ENCODE measurements at regions of chr10 and their contacts with region 1.

Region 1: DNA sequence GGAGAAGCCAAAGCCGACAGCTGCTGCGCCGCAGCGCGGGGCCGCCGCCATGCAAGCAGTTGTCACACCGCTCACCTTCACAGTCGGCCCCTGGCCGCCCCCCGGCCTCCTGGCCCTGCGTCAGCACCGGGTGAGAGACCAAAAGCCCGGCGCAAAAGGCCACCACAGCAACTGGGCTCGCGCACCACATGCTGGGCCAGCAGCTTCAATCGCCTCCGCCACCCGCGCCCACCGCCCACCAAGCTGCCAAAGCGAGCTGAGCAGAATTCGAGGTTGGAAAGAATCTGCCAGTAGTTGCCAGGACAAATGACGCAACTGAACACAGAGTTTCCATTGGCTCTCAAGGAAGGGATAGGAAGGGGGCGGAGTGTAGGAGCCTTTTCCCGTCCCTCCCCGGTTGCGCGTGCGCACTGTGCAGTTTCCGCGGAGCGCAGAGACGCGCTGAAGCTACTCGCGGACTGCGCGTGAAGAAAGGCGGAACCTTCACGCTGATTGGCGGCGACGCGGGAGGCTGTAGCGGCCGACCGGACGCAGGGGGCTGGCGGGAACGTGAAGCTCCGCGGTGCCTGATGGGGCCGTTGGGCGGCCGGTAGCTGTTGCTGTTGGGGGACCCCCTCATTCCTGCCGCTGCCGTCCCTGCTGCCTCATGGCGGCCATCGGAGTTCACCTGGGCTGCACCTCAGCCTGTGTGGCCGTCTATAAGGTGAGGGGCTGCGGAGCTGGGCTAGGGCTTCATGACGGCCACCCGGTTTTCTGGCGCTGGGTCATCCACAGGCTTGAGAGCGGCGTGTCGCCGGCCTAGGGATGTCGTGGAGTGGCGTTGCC is at the starts of genes CDNF, HSPA14 and MSANTD7:
- DNase-seq: peak; percentile 99
- ATAC-seq: peak; percentile 96
- H3K4me3 Mint-ChIP-seq: peak within 1 kb of the TSS; percentile 95
- H3K27ac Mint-ChIP-seq: peak within 1 kb of the TSS; percentile 98
- H3K4me1 Mint-ChIP-seq: peaks cover 24% of the 10 kb centered on the region
- H3K27me3 Mint-ChIP-seq: no peaks in the 10 kb centered on the region
- CTCF ChIP-seq: no peak
- total RNA-seq, gene CDNF: 1.5 to 1.8 TPM
- total RNA-seq, gene HSPA14: 36.1 to 36.7 TPM
- total RNA-seq, gene MSANTD7: 22.5 to 23.9 TPM

Region 2: GRCh38 chr10:14500172-14500765 is 337.7 kb before region 1 on chr10:
- CTCF ChIA-PET with region 1: interaction called, 12 read pairs
- POLR2A ChIA-PET with region 1: interaction called, 3 read pairs
- intact Hi-C with region 1: no loop called
- DNase-seq: no peak
- ATAC-seq: no peak
- H3K4me3 Mint-ChIP-seq: no peak overlapping the region
- H3K27ac Mint-ChIP-seq: no peak overlapping the region
- H3K4me1 Mint-ChIP-seq: peaks cover 7% of the 10 kb centered on the region
- H3K27me3 Mint-ChIP-seq: no peaks in the 10 kb centered on the region
- CTCF ChIP-seq: no peak

Region 3: DNA sequence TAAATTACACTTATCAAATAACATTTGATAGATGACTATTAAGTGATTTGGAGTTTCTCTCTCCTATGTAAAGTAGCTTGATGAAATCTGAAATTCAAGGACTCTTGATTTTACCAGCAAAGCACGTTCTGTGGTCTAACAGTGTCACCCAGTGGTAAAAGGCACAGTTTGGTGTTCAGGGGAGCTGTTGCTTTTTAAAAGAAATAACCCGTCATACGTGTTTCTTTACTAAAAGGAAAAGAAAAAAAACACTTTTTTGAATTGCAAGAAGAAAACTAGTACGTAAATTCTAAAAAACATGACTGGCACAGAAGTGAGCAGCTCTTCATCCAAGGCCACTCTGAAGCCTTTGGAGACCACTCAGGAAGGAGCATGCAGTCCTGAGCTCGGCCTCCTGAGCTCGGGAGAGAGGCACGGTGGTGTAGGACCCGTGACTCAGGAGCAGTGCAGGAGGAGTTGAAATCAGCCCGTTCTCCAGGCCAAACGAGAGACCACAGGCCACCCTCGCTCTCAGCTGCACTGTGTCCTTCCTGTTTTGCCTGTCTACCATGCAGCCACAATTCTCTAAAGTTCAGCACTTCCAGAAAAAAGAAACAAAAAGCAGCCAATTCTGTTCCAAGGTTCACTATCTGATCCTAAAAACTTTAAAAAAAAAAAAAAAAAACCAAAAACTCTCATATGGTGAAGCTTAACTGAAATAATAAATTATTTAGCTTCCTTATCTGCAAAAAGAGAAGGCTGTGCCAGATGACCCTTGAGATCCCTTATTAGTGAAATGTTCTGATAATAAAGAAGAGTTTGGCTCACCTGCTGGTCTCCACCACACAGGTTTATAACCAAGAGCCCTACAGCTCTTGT is 294.7 kb before region 1 on chr10:
- CTCF ChIA-PET with region 1: interaction called, 10 read pairs
- POLR2A ChIA-PET with region 1: no interaction called
- intact Hi-C with region 1: no loop called
- DNase-seq: peak; percentile 60
- ATAC-seq: peak; percentile 74
- H3K4me3 Mint-ChIP-seq: peak overlapping the region; percentile 58
- H3K27ac Mint-ChIP-seq: peak overlapping the region; percentile 88
- H3K4me1 Mint-ChIP-seq: peaks cover 83% of the 10 kb centered on the region
- H3K27me3 Mint-ChIP-seq: no peaks in the 10 kb centered on the region
- CTCF ChIP-seq: peak; percentile 32

Region 4: DNA sequence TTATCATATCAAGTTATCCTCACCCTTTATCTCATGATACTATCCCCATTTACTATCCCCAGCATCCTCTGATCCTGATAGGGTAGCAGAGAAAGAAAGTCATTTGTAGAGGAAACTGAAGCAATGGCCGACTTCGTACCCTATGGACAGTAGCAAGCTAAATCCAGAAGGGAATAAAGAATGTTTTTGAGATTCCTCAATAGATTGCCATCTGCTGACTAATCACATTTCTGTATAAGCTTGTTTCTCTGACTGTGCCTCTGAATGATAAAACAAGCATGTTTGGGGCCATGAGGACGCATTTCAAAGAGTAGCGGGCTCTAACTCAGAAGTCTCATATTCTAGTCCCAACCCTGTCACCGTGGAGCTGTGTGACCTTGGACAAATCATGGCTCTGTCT is 50.0 kb before region 1 on chr10:
- CTCF ChIA-PET with region 1: no interaction called
- POLR2A ChIA-PET with region 1: no interaction called
- intact Hi-C with region 1: no loop called
- DNase-seq: no peak
- ATAC-seq: no peak
- H3K4me3 Mint-ChIP-seq: no peak overlapping the region
- H3K27ac Mint-ChIP-seq: no peak overlapping the region
- H3K4me1 Mint-ChIP-seq: peaks cover under 1% of the 10 kb centered on the region
- H3K27me3 Mint-ChIP-seq: no peaks in the 10 kb centered on the region
- CTCF ChIP-seq: no peak

Region 5: GRCh38 chr10:14878266-14879054 is 40.5 kb after region 1 on chr10 and contains the start of gene SUV39H2:
- CTCF ChIA-PET with region 1: interaction called, 3 read pairs
- POLR2A ChIA-PET with region 1: interaction called, 19 read pairs
- intact Hi-C with region 1: no loop called
- DNase-seq: peak; percentile 95
- ATAC-seq: peak; percentile 93
- H3K4me3 Mint-ChIP-seq: peak within 1 kb of the TSS; percentile 96
- H3K27ac Mint-ChIP-seq: peak within 1 kb of the TSS; percentile 93
- H3K4me1 Mint-ChIP-seq: peaks cover 40% of the 10 kb centered on the region
- H3K27me3 Mint-ChIP-seq: no peaks in the 10 kb centered on the region
- CTCF ChIP-seq: no peak
- total RNA-seq, gene SUV39H2: 40.9 to 45.8 TPM

Region 6: GRCh38 chr10:14959276-14960057 is 121.5 kb after region 1 on chr10 and contains the start of gene MEIG1:
- CTCF ChIA-PET with region 1: no interaction called
- POLR2A ChIA-PET with region 1: interaction called, 7 read pairs
- intact Hi-C with region 1: loop called (anchors 10 kb)
- DNase-seq: peak; percentile 94
- ATAC-seq: peak; percentile 88
- H3K4me3 Mint-ChIP-seq: peak within 1 kb of the TSS; percentile 98
- H3K27ac Mint-ChIP-seq: peak within 1 kb of the TSS; percentile 99
- H3K4me1 Mint-ChIP-seq: peaks cover 19% of the 10 kb centered on the region
- H3K27me3 Mint-ChIP-seq: no peaks in the 10 kb centered on the region
- CTCF ChIP-seq: no peak
- total RNA-seq, gene MEIG1: 0.79 TPM in 1 of 2 experiments, not detected in the other

Measured in activated CD8-positive, alpha-beta T cell treated with anti-CD3 and anti-CD28 coated beads for 36 hours (primary cell).